Activated naive CD4-positive, alpha-beta T cell treated with anti-CD3 and anti-CD28 coated beads for 36 hours (primary cell): ENCODE measurements at regions of chr5 and their contacts with region 1.

Region 1: DNA sequence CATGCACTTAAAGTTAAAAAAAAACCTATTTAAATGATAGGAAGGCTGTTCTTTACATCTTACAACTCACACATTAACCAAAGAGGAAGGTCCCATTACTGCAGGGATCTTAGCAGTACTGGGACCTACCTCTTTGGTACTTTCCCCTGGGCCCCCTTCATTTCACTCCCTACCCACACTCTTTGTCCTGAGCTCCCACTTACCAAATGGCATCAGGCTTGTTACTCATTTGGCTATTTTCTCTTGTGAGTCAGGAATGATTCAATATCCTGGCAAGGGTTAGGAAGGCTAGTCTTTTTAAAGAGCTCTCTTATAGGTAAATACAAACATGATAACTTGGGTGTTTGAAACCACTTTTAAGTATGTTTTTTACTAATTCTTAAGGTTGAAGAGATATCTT is 117.4 kb upstream of the ELL2 start:
- DNase-seq: peak; percentile 71
- H3K4me3 Mint-ChIP-seq: no peak overlapping the region
- H3K27ac Mint-ChIP-seq: peak overlapping the region; percentile 77
- H3K4me1 Mint-ChIP-seq: peaks cover 38% of the 10 kb centered on the region
- H3K27me3 Mint-ChIP-seq: peaks cover 9% of the 10 kb centered on the region

Region 2: GRCh38 chr5:95334900-95335538 is 744.1 kb before region 1 on chr5:
- CTCF ChIA-PET with region 1: no interaction called
- intact Hi-C with region 1: no loop called
- DNase-seq: no peak
- H3K4me3 Mint-ChIP-seq: no peak overlapping the region
- H3K27ac Mint-ChIP-seq: no peak overlapping the region
- H3K4me1 Mint-ChIP-seq: no peaks in the 10 kb centered on the region
- H3K27me3 Mint-ChIP-seq: peaks cover 8% of the 10 kb centered on the region

Region 3: GRCh38 chr5:96065577-96066385 is 13.3 kb before region 1 on chr5:
- CTCF ChIA-PET with region 1: interaction called, 6 read pairs
- intact Hi-C with region 1: loop called (anchors 1 kb)
- DNase-seq: peak; percentile 37
- H3K4me3 Mint-ChIP-seq: no peak overlapping the region
- H3K27ac Mint-ChIP-seq: peak overlapping the region; percentile 59
- H3K4me1 Mint-ChIP-seq: peaks cover 31% of the 10 kb centered on the region
- H3K27me3 Mint-ChIP-seq: no peaks in the 10 kb centered on the region

Region 4: DNA sequence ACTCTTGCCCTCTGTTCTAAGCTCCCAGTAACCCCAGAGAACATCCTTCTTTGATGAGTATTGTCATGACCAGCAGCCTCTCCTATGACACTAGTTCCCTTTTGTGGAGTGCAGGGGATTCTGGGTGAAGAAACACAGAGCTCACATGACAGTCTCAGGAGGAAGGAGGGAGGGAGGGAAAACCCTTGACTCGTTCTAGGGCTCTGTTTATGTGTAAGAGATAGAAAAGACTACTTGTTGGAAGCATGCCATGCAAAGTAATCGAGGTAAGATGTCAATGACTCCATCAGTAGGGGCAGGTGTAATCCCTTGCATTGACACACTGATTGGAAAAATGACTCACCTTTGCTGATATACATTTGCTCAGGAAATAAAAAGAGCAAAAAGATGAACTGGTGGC is 72.8 kb after region 1 on chr5:
- CTCF ChIA-PET with region 1: no interaction called
- intact Hi-C with region 1: loop called (anchors 1 kb)
- DNase-seq: peak; percentile 63
- H3K4me3 Mint-ChIP-seq: no peak overlapping the region
- H3K27ac Mint-ChIP-seq: peak overlapping the region; percentile 10
- H3K4me1 Mint-ChIP-seq: peaks cover 6% of the 10 kb centered on the region
- H3K27me3 Mint-ChIP-seq: no peaks in the 10 kb centered on the region

Region 5: GRCh38 chr5:96336351-96336985 is 257.4 kb after region 1 on chr5:
- CTCF ChIA-PET with region 1: no interaction called
- intact Hi-C with region 1: loop called (anchors 1 kb)
- DNase-seq: peak; percentile 81
- H3K4me3 Mint-ChIP-seq: no peak overlapping the region
- H3K27ac Mint-ChIP-seq: no peak overlapping the region
- H3K4me1 Mint-ChIP-seq: peaks cover 18% of the 10 kb centered on the region
- H3K27me3 Mint-ChIP-seq: peaks cover 16% of the 10 kb centered on the region